ENCODE measurements at regions of chr12 and their contacts with region 1.

Region 1: DNA sequence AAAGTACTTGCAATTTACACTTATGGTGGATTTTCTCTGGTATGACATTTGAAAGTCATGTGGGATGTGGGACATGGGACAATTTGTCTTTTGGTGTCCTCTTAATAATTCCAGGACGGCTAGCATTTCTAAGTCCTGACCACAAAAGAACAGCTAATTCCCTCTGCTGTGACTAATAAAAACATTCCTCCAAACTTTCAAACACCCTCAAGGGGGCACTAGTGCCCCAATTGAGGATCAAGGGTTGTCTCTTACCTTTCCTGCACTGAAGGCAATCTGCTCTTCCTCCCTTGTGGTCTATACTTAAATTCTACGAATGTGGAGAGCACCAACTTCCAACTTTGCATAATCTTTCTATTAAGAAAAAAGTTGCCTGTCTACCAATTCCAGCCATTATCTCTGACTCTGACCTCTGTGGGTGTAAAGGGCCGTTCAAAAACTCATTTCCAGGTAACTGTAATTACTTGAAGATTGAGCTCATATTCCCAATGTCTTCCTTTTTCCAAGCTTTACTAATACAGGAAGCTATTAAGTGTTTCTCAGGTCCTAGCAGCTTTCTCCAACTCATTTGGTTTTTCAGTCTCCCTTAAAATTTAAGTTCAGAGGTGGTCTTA is 210.2 kb downstream of the PTPRO start:
- DNase-seq: peak; percentile 12 to 80 (median 69)
- ATAC-seq: peak; percentile 86
- H3K4me3 ChIP-seq: peak overlapping the region; percentile 4
- H3K4me3 Mint-ChIP-seq: peak overlapping the region in 8 of 10 donors; percentile 0 to 62 (median 40)
- H3K27ac ChIP-seq: no peak overlapping the region
- H3K27ac Mint-ChIP-seq: peak overlapping the region in 6 of 9 donors; percentile 28 to 92 (median 80)
- H3K4me1 ChIP-seq: peaks cover 0 to 33% of the 10 kb centered on the region in 2 donors
- H3K4me1 Mint-ChIP-seq: peaks cover 0 to 13% (median under 1%) of the 10 kb centered on the region in 7 donors
- H3K27me3 ChIP-seq: no peaks in the 10 kb centered on the region
- H3K27me3 Mint-ChIP-seq: peaks cover 0 to 24% (median 0%) of the 10 kb centered on the region in 5 donors

Region 2: GRCh38 chr12:15546102-15546701 is 13.7 kb after region 1 on chr12:
- CTCF ChIA-PET with region 1: interaction called, 101 read pairs
- POLR2A ChIA-PET with region 1: interaction called, 99 read pairs
- intact Hi-C with region 1: loop called (anchors 1 kb)
- DNase-seq: peak in 7 of 9 donors; percentile 73 to 89 (median 85)
- ATAC-seq: peak; percentile 93
- H3K4me3 ChIP-seq: no peak overlapping the region
- H3K4me3 Mint-ChIP-seq: peak overlapping the region; percentile 36 to 85 (median 76)
- H3K27ac ChIP-seq: peak overlapping the region; percentile 74
- H3K27ac Mint-ChIP-seq: peak overlapping the region; percentile 95 to 100 (median 98)
- H3K4me1 ChIP-seq: peaks cover 0 to 50% of the 10 kb centered on the region in 2 donors
- H3K4me1 Mint-ChIP-seq: peaks cover 30 to 98% (median 86%) of the 10 kb centered on the region in 7 donors
- H3K27me3 ChIP-seq: peaks cover 0 to under 1% of the 10 kb centered on the region in 2 donors
- H3K27me3 Mint-ChIP-seq: no peaks in the 10 kb centered on the region

Region 3: GRCh38 chr12:15575671-15576541 is 43.4 kb after region 1 on chr12:
- CTCF ChIA-PET with region 1: interaction called, 405 read pairs
- POLR2A ChIA-PET with region 1: interaction called, 730 read pairs
- intact Hi-C with region 1: loop called (anchors 1 kb)
- DNase-seq: no peak
- ATAC-seq: no peak
- H3K4me3 ChIP-seq: no peak overlapping the region
- H3K4me3 Mint-ChIP-seq: peak overlapping the region in 3 of 10 donors; percentile 0 to 48 (median 21)
- H3K27ac ChIP-seq: no peak overlapping the region
- H3K27ac Mint-ChIP-seq: peak overlapping the region in 6 of 9 donors; percentile 6 to 74 (median 24)
- H3K4me1 ChIP-seq: peaks cover 0 to 7% of the 10 kb centered on the region in 2 donors
- H3K4me1 Mint-ChIP-seq: peaks cover 11 to 63% (median 47%) of the 10 kb centered on the region in 7 donors
- H3K27me3 ChIP-seq: no peaks in the 10 kb centered on the region
- H3K27me3 Mint-ChIP-seq: no peaks in the 10 kb centered on the region

Region 4: DNA sequence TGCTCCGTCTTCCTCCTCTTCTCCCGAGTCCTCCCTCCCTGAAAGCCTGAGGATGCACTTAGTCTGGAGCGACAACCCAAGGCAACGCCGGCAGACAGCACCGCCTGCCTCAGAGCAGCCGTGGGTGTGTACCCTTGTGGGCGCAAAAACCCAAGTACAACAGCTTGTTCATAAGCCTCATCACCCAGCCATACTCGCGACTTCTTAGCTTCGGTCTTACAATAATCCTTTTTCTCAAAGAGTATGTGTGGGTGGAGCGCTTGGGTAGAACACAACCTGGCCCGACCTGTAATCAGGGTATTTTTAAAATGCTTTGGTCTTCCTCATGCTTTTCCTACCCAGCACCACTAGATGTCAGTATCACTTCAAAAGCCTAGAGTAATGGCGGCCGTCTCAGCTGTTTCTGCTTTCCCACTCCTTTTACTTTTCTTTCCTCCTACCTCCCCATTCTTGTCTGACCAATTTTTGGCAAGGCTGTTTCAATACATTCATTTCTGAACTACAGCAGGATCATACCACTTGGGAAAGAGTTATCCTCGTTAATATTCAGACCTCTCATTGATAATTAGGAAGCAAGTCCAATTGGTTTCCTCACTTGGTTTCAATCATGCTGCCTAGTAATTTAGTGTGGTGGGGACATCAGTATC is 57.8 kb after region 1 on chr12:
- CTCF ChIA-PET with region 1: interaction called, 405 read pairs
- POLR2A ChIA-PET with region 1: interaction called, 24 read pairs
- intact Hi-C with region 1: no loop called
- DNase-seq: peak; percentile 12 to 74 (median 66)
- ATAC-seq: peak; percentile 98
- H3K4me3 ChIP-seq: peak overlapping the region; percentile 40
- H3K4me3 Mint-ChIP-seq: peak overlapping the region; percentile 63 to 88 (median 78)
- H3K27ac ChIP-seq: no peak overlapping the region
- H3K27ac Mint-ChIP-seq: peak overlapping the region in 8 of 9 donors; percentile 61 to 86 (median 69)
- H3K4me1 ChIP-seq: peaks cover 0 to 5% of the 10 kb centered on the region in 2 donors
- H3K4me1 Mint-ChIP-seq: peaks cover 0 to 12% (median 8%) of the 10 kb centered on the region in 7 donors
- H3K27me3 ChIP-seq: no peaks in the 10 kb centered on the region
- H3K27me3 Mint-ChIP-seq: peaks cover 0 to 4% (median 0%) of the 10 kb centered on the region in 5 donors

Region 5: GRCh38 chr12:15789220-15790171 is 257.0 kb after region 1 on chr12 and contains the start of gene EPS8:
- CTCF ChIA-PET with region 1: interaction called, 5 read pairs
- POLR2A ChIA-PET with region 1: interaction called, 6 read pairs
- intact Hi-C with region 1: loop called (anchors 2 to 5 kb)
- DNase-seq: peak; percentile 82 to 92 (median 91)
- ATAC-seq: peak; percentile 95
- H3K4me3 ChIP-seq: peak within 1 kb of the TSS; percentile 78
- H3K4me3 Mint-ChIP-seq: peak within 1 kb of the TSS; percentile 91 to 99 (median 96)
- H3K27ac ChIP-seq: peak within 1 kb of the TSS; percentile 63
- H3K27ac Mint-ChIP-seq: peak within 1 kb of the TSS; percentile 58 to 97 (median 84)
- H3K4me1 ChIP-seq: peaks cover 0 to 7% of the 10 kb centered on the region in 2 donors
- H3K4me1 Mint-ChIP-seq: peaks cover 10 to 17% (median 15%) of the 10 kb centered on the region in 7 donors
- H3K27me3 ChIP-seq: peaks cover 0 to 11% of the 10 kb centered on the region in 2 donors
- H3K27me3 Mint-ChIP-seq: peaks cover 26 to 74% (median 49%) of the 10 kb centered on the region in 5 donors
- total RNA-seq, gene EPS8: 2.0 to 3.1 (median 2.7) TPM

Region 6: GRCh38 chr12:15823360-15824128 is 291.1 kb after region 1 on chr12:
- CTCF ChIA-PET with region 1: no interaction called
- POLR2A ChIA-PET with region 1: no interaction called
- intact Hi-C with region 1: no loop called
- DNase-seq: no peak
- ATAC-seq: no peak
- H3K4me3 ChIP-seq: no peak overlapping the region
- H3K4me3 Mint-ChIP-seq: no peak overlapping the region
- H3K27ac ChIP-seq: no peak overlapping the region
- H3K27ac Mint-ChIP-seq: no peak overlapping the region
- H3K4me1 ChIP-seq: no peaks in the 10 kb centered on the region
- H3K4me1 Mint-ChIP-seq: peaks cover 0 to 5% (median 0%) of the 10 kb centered on the region in 7 donors
- H3K27me3 ChIP-seq: no peaks in the 10 kb centered on the region
- H3K27me3 Mint-ChIP-seq: peaks cover 5 to 8% (median 6%) of the 10 kb centered on the region in 5 donors

Region 7: GRCh38 chr12:15882118-15882971 is 349.9 kb after region 1 on chr12 and contains the start of gene STRAP:
- CTCF ChIA-PET with region 1: no interaction called
- POLR2A ChIA-PET with region 1: interaction called, 5 read pairs
- intact Hi-C with region 1: loop called (anchors 2 kb)
- DNase-seq: peak; percentile 94 to 98 (median 97)
- ATAC-seq: peak; percentile 97
- H3K4me3 ChIP-seq: peak within 1 kb of the TSS; percentile 97
- H3K4me3 Mint-ChIP-seq: peak within 1 kb of the TSS; percentile 91 to 100 (median 97)
- H3K27ac ChIP-seq: peak within 1 kb of the TSS; percentile 96
- H3K27ac Mint-ChIP-seq: peak within 1 kb of the TSS; percentile 98 to 100 (median 99)
- H3K4me1 ChIP-seq: peaks cover 22 to 32% of the 10 kb centered on the region in 2 donors
- H3K4me1 Mint-ChIP-seq: peaks cover 35 to 66% (median 60%) of the 10 kb centered on the region in 7 donors
- H3K27me3 ChIP-seq: no peaks in the 10 kb centered on the region
- H3K27me3 Mint-ChIP-seq: no peaks in the 10 kb centered on the region
- total RNA-seq, gene STRAP: 42.2 to 97.2 (median 70.9) TPM